Activated T-helper 1 cell treated with anti-CD3 and anti-CD28 coated beads, Interleukin-12 subunit alpha, Interleukin-12 subunit beta, Interleukin-2, Interleukin-4 antibody, amounts not matched to agents 30 ng/mL and 10 ng/mL and 1 ng/mL, durations not matched to agents 14 hours and 24 hours and 36 hours (primary cell): ENCODE measurements at regions of chr11 and their contacts with region 1.

Region 1: DNA sequence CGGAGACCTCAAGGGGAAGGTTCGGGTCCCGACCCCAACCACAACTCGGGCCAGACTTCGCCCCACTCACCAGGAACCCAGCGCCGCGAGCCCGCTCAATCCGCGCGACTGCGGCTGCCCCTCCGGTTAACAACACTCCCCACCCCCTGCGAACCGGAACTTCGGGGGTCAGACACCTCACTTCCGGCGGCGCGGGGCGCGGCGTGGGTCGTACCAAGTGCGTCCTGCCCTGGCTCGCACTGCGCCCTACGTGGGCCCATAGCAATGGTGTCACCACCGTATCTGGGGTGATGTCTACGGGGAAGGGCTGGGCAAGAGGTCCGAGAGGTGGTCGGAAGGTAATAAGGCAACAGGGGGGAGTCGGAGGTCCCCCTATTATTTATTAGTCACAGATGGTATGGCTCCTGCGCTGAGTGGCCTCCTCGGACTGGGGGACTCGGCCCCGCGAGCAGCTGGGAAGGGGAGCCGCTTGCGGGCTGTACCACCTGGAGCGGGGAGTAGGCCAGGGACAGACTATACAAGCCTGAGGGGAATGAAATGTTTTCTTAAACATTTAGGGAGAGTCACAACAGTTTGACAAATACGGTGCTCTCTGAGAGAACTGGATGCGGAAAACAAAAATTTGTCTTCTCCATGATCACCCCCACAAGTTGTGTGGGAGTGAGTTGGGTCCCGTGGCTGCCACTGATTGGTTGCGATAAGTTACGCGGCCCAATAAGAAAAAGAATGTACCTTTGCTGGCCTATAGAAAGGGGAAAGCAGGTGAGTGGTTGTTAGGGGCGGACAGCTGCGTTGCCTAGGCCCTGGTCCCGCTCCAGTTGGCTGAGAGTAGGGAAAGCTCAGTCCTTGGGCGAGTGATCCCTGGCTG is at the start of gene SYVN1:
- DNase-seq: peak; percentile 91
- H3K4me3 Mint-ChIP-seq: peak within 1 kb of the TSS; percentile 97
- H3K27ac Mint-ChIP-seq: peak within 1 kb of the TSS; percentile 97
- H3K4me1 Mint-ChIP-seq: peaks cover 32% of the 10 kb centered on the region
- H3K27me3 Mint-ChIP-seq: no peaks in the 10 kb centered on the region
- total RNA-seq, gene SYVN1: 42.3 and 45.8 TPM in 2 replicates

Region 2: DNA sequence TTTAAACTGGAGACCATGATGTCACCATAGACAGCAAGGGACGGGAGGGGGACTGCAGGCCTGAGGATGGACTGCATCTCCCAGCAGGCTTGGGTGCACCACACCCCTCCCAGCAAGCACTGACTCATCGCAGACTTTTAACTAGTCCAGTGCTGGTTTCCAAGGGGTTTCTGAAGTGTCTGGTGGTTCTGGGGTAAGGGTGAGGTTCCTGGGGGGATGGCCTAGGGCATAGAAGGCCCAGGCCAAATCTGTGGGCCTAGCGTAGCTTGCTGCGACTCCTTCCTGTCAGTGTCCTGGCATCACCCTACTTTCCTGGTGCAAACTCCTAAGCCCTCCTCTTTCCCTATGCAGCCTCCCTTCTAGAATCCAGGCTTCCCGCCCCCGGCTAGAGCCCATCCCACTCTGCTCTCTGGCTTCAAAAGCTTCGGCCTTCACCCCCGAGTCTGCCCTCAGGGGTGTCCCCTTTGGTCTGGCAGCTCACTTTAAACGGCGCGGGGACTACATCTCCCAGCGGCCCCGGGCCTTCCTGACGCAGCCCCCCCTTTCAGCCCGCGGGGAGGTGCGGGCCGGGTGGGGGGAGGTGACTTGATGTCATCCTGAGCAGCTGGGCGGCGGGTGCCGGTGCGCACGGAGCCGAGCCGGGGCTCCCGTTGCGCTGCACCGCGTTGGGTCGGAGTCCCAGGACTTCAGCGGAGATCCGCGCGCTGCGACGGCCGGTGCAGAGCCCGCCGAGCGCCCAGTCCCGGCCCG is 210.3 kb before region 1 on chr11 and contains the start of gene PPP2R5B:
- intact Hi-C with region 1: loop called (anchors 1 kb)
- DNase-seq: peak; percentile 89
- H3K4me3 Mint-ChIP-seq: peak within 1 kb of the TSS; percentile 93
- H3K27ac Mint-ChIP-seq: peak within 1 kb of the TSS; percentile 97
- H3K4me1 Mint-ChIP-seq: peaks cover 20% of the 10 kb centered on the region
- H3K27me3 Mint-ChIP-seq: no peaks in the 10 kb centered on the region
- total RNA-seq, gene PPP2R5B: 7.3 and 14.0 TPM in 2 replicates

Region 3: GRCh38 chr11:65095974-65096806 is 38.4 kb before region 1 on chr11 and contains the start of gene VPS51:
- intact Hi-C with region 1: loop called (anchors 1 kb)
- DNase-seq: peak; percentile 80
- H3K4me3 Mint-ChIP-seq: peak within 1 kb of the TSS; percentile 91
- H3K27ac Mint-ChIP-seq: peak within 1 kb of the TSS; percentile 94
- H3K4me1 Mint-ChIP-seq: peaks cover 11% of the 10 kb centered on the region
- H3K27me3 Mint-ChIP-seq: no peaks in the 10 kb centered on the region
- total RNA-seq, gene VPS51: 137 and 139 TPM in 2 replicates

Region 4: GRCh38 chr11:65110354-65110861 is 24.2 kb before region 1 on chr11:
- intact Hi-C with region 1: no loop called
- DNase-seq: peak; percentile 90
- H3K4me3 Mint-ChIP-seq: peak overlapping the region; percentile 11
- H3K27ac Mint-ChIP-seq: peak overlapping the region; percentile 53
- H3K4me1 Mint-ChIP-seq: peaks cover 39% of the 10 kb centered on the region
- H3K27me3 Mint-ChIP-seq: peaks cover 2% of the 10 kb centered on the region

Region 5: DNA sequence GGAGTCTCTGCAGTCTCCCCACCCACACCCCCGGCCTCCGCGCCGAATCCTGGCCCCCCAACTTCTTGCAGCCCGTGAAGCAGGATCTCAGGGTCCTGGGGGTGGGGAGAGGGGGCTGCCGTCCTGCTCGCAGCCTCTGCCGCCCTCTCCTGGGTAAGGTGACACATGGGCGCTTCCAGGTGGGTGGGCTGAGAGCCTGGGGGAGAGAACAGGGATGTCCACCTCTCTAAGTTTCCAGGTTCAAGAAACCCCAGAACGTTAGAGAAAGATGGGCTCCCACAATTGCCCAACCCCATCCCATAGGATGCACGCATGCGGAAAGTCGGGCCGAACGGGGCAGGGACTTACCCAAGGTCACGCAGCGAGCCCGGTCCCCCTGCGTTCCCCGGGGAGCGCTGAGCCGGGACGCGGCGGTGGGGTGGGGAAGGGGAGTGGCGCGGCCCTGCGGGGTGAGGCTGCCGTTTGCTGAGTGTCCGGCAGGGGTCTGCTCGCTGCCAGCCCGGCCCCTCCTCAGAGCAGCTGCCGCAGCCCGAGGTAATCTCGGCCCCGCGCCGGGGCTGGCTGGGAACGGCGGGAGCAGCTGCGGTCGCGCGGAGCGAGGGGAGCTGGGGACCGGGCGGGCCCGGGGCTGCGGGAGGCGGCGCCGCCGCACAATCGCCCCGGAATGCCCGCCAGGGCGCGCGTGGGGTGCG is 46.4 kb after region 1 on chr11:
- intact Hi-C with region 1: loop called (anchors 1 kb)
- DNase-seq: peak; percentile 52
- H3K4me3 Mint-ChIP-seq: peak overlapping the region; percentile 85
- H3K27ac Mint-ChIP-seq: peak overlapping the region; percentile 52
- H3K4me1 Mint-ChIP-seq: peaks cover 5% of the 10 kb centered on the region
- H3K27me3 Mint-ChIP-seq: peaks cover 19% of the 10 kb centered on the region

Region 6: GRCh38 chr11:65637794-65638317 is 503.2 kb after region 1 on chr11 and contains the start of gene SIPA1:
- intact Hi-C with region 1: no loop called
- DNase-seq: peak; percentile 74
- H3K4me3 Mint-ChIP-seq: peak within 1 kb of the TSS; percentile 82
- H3K27ac Mint-ChIP-seq: peak within 1 kb of the TSS; percentile 83
- H3K4me1 Mint-ChIP-seq: peaks cover 40% of the 10 kb centered on the region
- H3K27me3 Mint-ChIP-seq: no peaks in the 10 kb centered on the region
- total RNA-seq, gene SIPA1: 117 and 130 TPM in 2 replicates